CD4-positive, alpha-beta memory T cell (primary cell): ENCODE measurements at regions of chr20 and their contacts with region 1.

Region 1: GRCh38 chr20:41142919-41143318 is 5.6 kb downstream of the PLCG1 start:
- DNase-seq: peak; percentile 49 to 82 (median 54)
- H3K4me3 ChIP-seq: peak overlapping the region in 1 of 2 donors; percentile 82
- H3K4me3 Mint-ChIP-seq: peak overlapping the region; percentile 93 to 99 (median 96)
- H3K27ac ChIP-seq: peak overlapping the region; percentile 84
- H3K27ac Mint-ChIP-seq: peak overlapping the region; percentile 88 to 98 (median 93)
- H3K4me1 ChIP-seq: peaks cover 89% of the 10 kb centered on the region
- H3K4me1 Mint-ChIP-seq: peaks cover 79 to 100% (median 87%) of the 10 kb centered on the region in 4 donors
- H3K27me3 ChIP-seq: no peaks in the 10 kb centered on the region
- H3K27me3 Mint-ChIP-seq: no peaks in the 10 kb centered on the region

Region 2: GRCh38 chr20:41161886-41162285 is 19.0 kb after region 1 on chr20:
- CTCF ChIA-PET with region 1: interaction called, 178 read pairs
- POLR2A ChIA-PET with region 1: interaction called, 753 read pairs
- intact Hi-C with region 1: loop called (anchors 1 kb)
- DNase-seq: peak in 2 of 5 donors; percentile 41 to 43
- H3K4me3 ChIP-seq: no peak overlapping the region
- H3K4me3 Mint-ChIP-seq: peak overlapping the region in 7 of 8 donors; percentile 26 to 86 (median 51)
- H3K27ac ChIP-seq: peak overlapping the region; percentile 73
- H3K27ac Mint-ChIP-seq: peak overlapping the region; percentile 87 to 99 (median 89)
- H3K4me1 ChIP-seq: peaks cover 64% of the 10 kb centered on the region
- H3K4me1 Mint-ChIP-seq: peaks cover 55 to 92% (median 70%) of the 10 kb centered on the region in 4 donors
- H3K27me3 ChIP-seq: no peaks in the 10 kb centered on the region
- H3K27me3 Mint-ChIP-seq: peaks cover 0 to 2% of the 10 kb centered on the region in 2 donors

Region 3: DNA sequence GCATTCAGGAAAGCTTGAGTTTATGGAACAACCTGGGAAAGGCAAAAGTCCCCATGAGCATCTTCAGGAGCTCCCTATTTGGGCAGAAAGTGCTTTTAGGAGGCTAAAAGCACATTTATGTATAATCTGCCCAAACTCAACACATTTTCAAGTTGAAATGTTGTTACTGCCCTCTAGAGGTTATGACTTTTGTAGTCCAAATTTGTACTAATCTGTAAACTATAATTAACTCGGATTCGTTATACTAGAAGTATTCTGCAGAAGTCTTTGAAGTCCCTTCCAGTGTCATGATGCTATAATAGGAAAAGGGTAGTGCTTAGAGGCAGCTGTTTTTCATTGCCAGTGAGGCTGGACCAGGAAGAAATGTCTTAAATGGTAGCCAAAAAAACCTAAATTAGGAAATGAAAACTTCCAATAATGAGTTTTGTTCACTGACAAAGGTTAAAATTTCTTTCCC is 268.5 kb after region 1 on chr20:
- CTCF ChIA-PET with region 1: no interaction called
- POLR2A ChIA-PET with region 1: no interaction called
- intact Hi-C with region 1: no loop called
- DNase-seq: no peak
- H3K4me3 ChIP-seq: no peak overlapping the region
- H3K4me3 Mint-ChIP-seq: no peak overlapping the region
- H3K27ac ChIP-seq: no peak overlapping the region
- H3K27ac Mint-ChIP-seq: no peak overlapping the region
- H3K4me1 ChIP-seq: peaks cover 10% of the 10 kb centered on the region
- H3K4me1 Mint-ChIP-seq: peaks cover 5 to 15% (median 12%) of the 10 kb centered on the region in 4 donors
- H3K27me3 ChIP-seq: no peaks in the 10 kb centered on the region
- H3K27me3 Mint-ChIP-seq: no peaks in the 10 kb centered on the region